ENCODE measurements at regions of chr2 and their contacts with region 1.

Region 1: GRCh38 chr2:133844214-133844892 is 276.1 kb upstream of the NCKAP5 start:
- DNase-seq: peak; percentile 41
- ATAC-seq: peak; percentile 94
- H3K4me3 ChIP-seq: no peak overlapping the region
- H3K27ac ChIP-seq: no peak overlapping the region
- H3K4me1 ChIP-seq: no peaks in the 10 kb centered on the region
- H3K27me3 ChIP-seq: no peaks in the 10 kb centered on the region
- CTCF ChIP-seq: peak; percentile 85

Region 2: DNA sequence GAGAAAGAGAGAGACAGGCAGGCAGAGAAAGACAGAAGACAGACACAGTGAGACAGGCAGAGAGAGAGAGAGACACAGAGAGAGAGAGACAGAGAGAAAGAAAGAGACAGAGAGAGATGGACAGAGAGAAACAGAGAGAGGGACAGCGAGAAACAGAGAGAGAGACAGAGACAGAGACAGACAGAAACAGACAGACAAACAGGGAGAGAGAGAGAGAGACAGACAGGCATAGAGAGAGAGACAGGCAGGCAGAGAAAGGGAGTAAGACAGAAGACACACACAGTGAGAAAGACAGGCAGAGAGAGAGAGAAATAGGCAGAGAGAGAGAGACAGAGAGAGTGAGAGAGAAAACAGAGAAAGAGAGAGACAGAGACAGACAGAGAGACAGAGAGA is 1577.3 kb before region 1 on chr2:
- CTCF ChIA-PET with region 1: no interaction called
- POLR2A ChIA-PET with region 1: no interaction called
- in situ Hi-C with region 1: no loop called
- intact Hi-C with region 1: loop called (anchors 5 kb)
- DNase-seq: no peak
- ATAC-seq: peak; percentile 46; the same call in 1 of the 2 replicates
- H3K4me3 ChIP-seq: no peak overlapping the region
- H3K27ac ChIP-seq: no peak overlapping the region
- H3K4me1 ChIP-seq: no peaks in the 10 kb centered on the region
- H3K27me3 ChIP-seq: peaks cover 2% of the 10 kb centered on the region; the same call in 1 of the 2 replicates
- CTCF ChIP-seq: no peak

Region 3: DNA sequence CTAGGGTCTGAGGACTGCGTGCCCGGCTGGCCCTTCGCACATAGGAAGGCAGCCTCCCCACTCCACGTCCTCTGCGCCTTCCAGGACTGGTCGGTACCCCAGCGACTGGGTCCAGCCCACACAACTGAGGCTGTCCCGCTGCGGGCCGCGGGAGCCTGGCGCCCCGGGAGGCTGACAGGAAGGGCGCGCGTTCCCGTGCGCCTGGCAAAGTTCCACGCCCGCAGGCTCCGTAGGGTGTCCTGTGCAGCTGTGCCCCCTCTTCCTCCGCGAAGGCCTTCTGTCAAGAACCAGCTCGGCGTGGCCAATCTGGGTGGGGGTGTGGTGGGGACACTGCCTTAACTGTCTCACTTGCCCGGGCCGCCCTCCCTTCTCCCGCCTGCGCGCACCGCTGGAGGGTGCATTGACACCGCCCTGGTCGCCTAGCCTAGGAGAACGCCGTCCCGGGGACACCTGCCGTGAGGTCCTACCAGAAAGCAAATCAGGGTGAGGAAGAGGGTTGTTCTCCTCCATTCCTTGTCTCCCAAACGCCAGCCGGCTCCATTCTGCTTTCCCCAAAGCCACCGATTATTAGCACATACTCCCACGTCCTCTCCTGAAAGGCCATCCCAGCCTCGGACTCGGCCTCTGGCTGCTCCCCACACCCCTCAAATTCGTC is 1173.7 kb before region 1 on chr2:
- CTCF ChIA-PET with region 1: no interaction called
- POLR2A ChIA-PET with region 1: no interaction called
- in situ Hi-C with region 1: no loop called
- intact Hi-C with region 1: loop called (anchors 10 kb)
- DNase-seq: no peak
- ATAC-seq: peak; percentile 63
- H3K4me3 ChIP-seq: peak overlapping the region; percentile 32 to 48
- H3K27ac ChIP-seq: no peak overlapping the region
- H3K4me1 ChIP-seq: peaks cover 6% of the 10 kb centered on the region
- H3K27me3 ChIP-seq: peaks cover 47% of the 10 kb centered on the region
- CTCF ChIP-seq: no peak

Region 4: DNA sequence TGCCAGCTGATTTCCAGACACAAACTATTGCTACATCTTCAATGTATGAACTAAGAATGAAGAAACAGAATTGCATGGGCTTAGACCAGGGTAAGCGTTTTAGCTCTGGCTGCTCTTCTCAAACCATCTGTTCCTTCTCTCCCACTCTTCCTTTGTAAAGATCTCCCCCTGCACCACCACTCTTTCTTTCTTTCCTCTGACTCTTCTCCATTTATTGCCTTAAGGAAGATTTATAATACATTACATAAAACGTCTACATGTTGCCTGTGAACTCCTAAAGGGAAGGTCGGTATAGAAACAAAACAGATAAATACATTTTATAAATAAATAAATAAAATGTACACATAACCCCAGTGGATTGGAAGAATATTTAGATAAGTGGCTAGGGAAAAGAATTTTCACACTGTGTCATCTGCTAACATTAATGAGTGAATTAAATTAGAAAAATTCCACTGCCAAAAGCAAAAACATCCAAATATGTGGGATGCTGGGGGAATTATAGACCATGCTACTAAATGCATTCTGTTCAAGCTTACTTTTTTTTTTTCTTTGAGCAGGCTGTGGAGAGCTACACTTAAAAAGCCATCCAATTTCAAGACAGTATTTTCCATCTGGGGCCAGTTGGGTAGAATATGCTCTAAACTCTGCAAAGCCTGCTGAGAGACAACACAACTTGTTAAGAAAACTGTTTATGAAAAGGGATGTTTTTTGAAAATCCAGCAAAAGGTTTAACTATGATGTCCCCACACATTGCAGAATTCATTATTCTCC is 317.6 kb before region 1 on chr2:
- CTCF ChIA-PET with region 1: no interaction called
- POLR2A ChIA-PET with region 1: no interaction called
- in situ Hi-C with region 1: no loop called
- intact Hi-C with region 1: loop called (anchors 10 kb)
- DNase-seq: no peak
- ATAC-seq: no peak
- H3K4me3 ChIP-seq: no peak overlapping the region
- H3K27ac ChIP-seq: no peak overlapping the region
- H3K4me1 ChIP-seq: no peaks in the 10 kb centered on the region
- H3K27me3 ChIP-seq: no peaks in the 10 kb centered on the region
- CTCF ChIP-seq: no peak

Region 5: DNA sequence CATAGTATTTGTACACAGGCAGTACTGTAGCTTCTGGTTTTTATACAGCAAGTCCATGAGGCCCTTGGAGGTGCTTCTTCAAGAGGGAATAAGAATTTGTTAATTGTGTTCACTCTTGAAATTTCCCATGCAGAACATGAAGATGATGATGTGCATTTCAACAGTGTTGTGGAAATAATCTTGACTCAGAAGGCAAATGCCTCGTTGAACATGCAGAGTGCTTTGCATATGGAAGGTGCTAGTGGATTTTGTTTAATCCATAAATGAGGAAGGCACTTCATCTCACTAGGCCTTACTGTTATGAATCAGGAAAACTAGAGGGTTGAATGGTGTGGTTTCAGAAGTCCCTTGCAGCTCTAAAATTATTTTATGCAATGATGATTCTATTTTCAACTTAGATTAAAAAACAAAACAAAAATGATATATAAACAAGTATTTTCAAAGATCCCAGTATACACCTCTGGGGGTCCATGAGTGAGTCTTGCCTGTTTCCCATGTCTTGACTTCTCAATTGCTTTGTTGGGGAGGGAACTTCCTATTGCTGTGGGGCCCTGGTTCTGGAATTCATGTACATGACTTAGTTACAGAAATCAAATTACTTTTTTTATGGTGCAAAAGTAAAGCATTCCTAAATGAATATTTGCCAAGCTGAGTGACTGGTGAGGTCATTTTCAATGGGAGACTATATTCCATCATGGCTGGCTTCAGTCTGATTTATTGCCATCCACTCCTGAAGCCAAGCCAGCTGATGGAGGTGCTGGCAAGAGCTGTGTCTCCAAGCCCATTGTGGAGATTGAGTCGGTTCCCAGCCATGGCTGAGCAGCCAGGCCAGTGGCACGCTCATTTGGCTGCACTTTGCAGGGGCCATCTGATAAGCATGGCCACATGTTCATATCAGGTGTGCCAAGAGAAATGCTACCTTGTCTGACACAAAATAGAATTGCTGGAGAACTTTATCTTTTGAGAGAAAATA is 466.0 kb after region 1 on chr2:
- CTCF ChIA-PET with region 1: no interaction called
- POLR2A ChIA-PET with region 1: no interaction called
- in situ Hi-C with region 1: no loop called
- intact Hi-C with region 1: no loop called
- DNase-seq: no peak
- ATAC-seq: no peak
- H3K4me3 ChIP-seq: no peak overlapping the region
- H3K27ac ChIP-seq: no peak overlapping the region
- H3K4me1 ChIP-seq: no peaks in the 10 kb centered on the region
- H3K27me3 ChIP-seq: no peaks in the 10 kb centered on the region
- CTCF ChIP-seq: no peak